SK-N-SH (cell line): ENCODE measurements at regions of chr7 and their contacts with region 1.

Region 1: DNA sequence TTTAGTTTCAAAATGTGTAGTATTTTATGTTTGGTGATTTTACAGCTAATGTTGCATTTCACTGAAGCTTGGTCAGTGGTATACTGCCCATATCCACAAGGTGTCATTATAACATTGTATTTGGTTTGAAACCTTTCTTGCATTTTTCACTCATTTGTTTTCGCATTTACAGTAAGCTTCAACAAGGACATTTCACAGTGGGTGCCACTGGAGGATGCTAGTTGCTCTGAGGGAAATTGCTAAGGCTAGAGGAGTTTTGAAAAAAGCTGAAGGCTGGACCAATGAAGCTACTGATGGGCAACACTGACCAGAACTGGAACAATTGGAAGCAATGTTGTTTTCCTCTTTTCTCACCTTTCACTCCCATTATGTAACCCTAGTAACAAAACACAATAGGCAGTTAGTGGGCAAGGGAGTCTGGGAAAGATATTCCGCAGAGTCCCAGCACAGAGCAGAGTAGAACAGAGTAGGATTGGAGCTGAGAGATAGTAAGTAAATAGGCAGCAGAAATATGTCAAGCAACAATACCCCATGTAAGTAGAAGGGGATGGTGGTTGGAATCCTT is 23.6 kb upstream of the SRI start:
- DNase-seq: peak; percentile 51
- H3K4me3 ChIP-seq: no peak overlapping the region; a peak in 1 of 4 replicates
- H3K27ac ChIP-seq: no peak overlapping the region
- H3K4me1 ChIP-seq: peaks cover 0 to 4% of the 10 kb centered on the region in 2 experiments; a peak in 2 of 4 replicates
- H3K27me3 ChIP-seq: no peaks in the 10 kb centered on the region
- CTCF ChIP-seq: peak; percentile 96
- EP300 ChIP-seq: no peak
- RAD21 ChIP-seq: peak; percentile 99

Region 2: GRCh38 chr7:88146616-88147015 is 96.8 kb before region 1 on chr7:
- CTCF ChIA-PET with region 1: no interaction called
- POLR2A ChIA-PET with region 1: no interaction called
- DNase-seq: no peak
- H3K4me3 ChIP-seq: no peak overlapping the region
- H3K27ac ChIP-seq: no peak overlapping the region
- H3K4me1 ChIP-seq: peaks cover 0 to 6% of the 10 kb centered on the region in 2 experiments; a peak in 2 of 4 replicates
- H3K27me3 ChIP-seq: no peaks in the 10 kb centered on the region
- CTCF ChIP-seq: no peak
- EP300 ChIP-seq: no peak
- RAD21 ChIP-seq: no peak

Region 3: DNA sequence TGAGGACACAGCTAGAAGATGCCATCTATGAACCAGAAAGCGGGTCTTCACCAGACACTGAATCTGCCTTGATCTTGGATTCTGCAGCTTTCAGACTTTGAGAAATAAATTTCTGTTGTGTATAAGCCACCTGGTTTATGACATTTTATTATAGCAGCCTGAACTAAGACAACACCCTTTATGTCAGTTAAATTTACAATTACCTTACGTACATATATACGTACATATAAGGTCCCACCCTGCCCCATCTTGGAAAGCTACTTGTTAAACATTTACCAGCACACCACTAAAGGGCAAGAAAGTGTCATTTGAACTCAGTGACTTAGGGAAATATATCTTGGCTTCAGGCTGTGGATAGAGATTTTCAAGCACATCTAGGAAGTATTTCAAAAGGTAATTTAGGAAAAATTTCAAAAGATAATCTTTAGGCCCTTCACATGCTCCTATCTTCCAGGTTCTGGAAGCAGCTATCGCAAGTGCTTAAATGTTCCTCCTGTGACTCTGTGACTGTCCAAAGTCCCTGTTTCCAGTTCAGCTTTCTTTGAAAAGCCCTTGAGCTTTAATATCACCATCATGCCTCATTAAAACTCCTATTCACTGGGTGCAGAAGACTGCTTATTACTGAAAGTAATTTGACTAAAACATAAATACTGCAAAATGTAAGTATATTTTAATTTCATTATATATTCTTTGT is 14.0 kb before region 1 on chr7:
- CTCF ChIA-PET with region 1: interaction called, 10 read pairs
- POLR2A ChIA-PET with region 1: no interaction called
- DNase-seq: no peak
- H3K4me3 ChIP-seq: no peak overlapping the region
- H3K27ac ChIP-seq: no peak overlapping the region
- H3K4me1 ChIP-seq: 0 out of 4 replicates have a peak, but pooled peaks cover 0 to 7% of the 10 kb centered on the region in 2 experiments
- H3K27me3 ChIP-seq: no peaks in the 10 kb centered on the region; the same call in 1 of the 2 replicates
- CTCF ChIP-seq: no peak
- EP300 ChIP-seq: no peak
- RAD21 ChIP-seq: no peak

Region 4: DNA sequence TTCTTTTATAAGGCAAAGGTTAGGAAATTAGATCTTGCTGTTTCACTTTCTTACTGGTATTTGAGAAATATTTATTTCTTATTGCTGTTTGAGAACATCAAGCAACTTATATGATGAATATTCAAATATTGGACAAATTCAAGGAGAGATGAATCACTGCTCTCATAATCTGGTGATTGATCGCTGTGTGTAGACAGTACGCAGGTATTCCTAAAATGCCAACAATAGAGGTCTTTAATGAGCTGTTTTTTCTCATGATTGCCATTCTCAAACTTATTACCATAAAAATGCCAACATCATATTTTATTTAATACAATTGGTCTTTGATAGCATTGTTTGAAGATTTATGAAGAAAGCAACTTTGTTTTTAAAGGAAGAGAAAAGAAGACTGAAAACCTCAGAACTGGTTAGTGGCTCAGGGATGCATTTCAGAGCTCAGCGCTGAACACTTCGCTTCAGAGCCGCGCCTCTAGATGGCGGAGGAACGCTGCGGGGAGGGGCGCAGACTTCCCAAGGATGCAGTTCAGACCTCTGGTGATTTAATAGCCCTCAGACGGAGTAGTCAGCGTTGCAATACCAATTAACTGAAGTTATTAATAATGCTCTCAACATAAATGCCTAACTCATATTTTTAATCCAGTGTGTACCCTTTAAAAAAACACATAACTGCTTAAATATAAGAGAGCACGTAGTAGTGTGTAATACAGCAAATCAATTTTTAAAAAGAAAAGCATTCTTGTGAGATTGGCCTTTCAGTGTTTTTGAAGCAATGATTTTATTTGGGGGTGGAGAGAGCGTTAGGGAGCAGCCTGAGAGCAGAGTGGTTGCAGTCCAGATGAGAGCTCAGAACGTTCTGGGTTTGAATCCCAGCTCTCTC is 101.8 kb after region 1 on chr7:
- CTCF ChIA-PET with region 1: interaction called, 30 read pairs
- POLR2A ChIA-PET with region 1: no interaction called
- DNase-seq: peak; percentile 47
- H3K4me3 ChIP-seq: no peak overlapping the region
- H3K27ac ChIP-seq: no peak overlapping the region
- H3K4me1 ChIP-seq: no peaks in the 10 kb centered on the region; a peak in 1 of 4 replicates
- H3K27me3 ChIP-seq: peaks cover 7% of the 10 kb centered on the region; the same call in 1 of the 2 replicates
- CTCF ChIP-seq: peak; percentile 52
- EP300 ChIP-seq: no peak
- RAD21 ChIP-seq: peak; percentile 79

Region 5: GRCh38 chr7:88617185-88617584 is 373.8 kb after region 1 on chr7:
- CTCF ChIA-PET with region 1: no interaction called
- POLR2A ChIA-PET with region 1: no interaction called
- DNase-seq: no peak
- H3K4me3 ChIP-seq: no peak overlapping the region
- H3K27ac ChIP-seq: no peak overlapping the region
- H3K4me1 ChIP-seq: no peaks in the 10 kb centered on the region
- H3K27me3 ChIP-seq: no peaks in the 10 kb centered on the region
- CTCF ChIP-seq: no peak
- EP300 ChIP-seq: no peak
- RAD21 ChIP-seq: no peak

Region 6: DNA sequence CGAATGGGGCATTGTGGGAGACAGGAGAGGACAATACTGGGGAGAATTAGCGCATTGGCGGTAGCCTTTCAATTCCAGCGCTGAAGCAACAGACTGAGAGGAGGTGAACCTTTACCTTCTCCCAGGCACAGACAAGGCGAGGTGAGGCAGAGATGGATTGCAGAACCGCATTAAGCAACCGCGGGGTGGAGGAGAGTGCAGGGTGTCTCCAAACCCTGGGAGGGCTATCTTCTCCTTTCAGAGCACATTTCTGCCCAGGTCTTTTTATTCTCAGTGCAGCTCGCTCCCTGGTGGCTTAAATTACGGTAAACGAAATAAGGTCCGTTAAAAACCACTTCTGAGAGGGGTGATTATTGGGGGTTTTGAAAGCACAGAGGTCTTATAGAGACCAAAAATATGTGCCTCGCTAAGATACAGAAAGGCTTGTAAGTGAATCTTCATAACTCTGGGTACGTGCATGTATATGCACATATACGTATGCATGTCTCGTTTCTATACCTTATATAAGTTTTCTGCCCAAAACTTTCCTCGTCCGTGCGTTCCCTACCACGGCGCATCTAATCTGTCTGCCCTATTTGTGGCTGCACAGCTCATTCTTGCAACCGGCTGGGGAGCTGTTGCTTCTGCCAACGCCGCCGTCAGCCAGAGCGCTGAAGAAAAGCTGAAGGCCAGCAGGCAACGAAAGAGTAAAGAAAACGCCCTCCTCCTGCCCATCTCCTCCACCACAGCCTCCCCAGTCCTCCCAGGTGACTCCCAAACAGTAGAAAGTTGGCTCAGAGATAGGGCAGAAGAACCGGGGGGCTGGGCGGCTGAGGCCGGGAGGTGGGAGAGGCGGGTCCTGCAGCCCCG is 515.2 kb after region 1 on chr7:
- CTCF ChIA-PET with region 1: interaction called, 11 read pairs
- POLR2A ChIA-PET with region 1: no interaction called
- DNase-seq: peak; percentile 61
- H3K4me3 ChIP-seq: peak overlapping the region; percentile 47 to 48
- H3K27ac ChIP-seq: no peak overlapping the region
- H3K4me1 ChIP-seq: peaks cover 0 to 17% of the 10 kb centered on the region in 2 experiments; a peak in 2 of 4 replicates
- H3K27me3 ChIP-seq: peaks cover 29% of the 10 kb centered on the region
- CTCF ChIP-seq: no peak
- EP300 ChIP-seq: no peak
- RAD21 ChIP-seq: peak; percentile 32

Region 7: GRCh38 chr7:89622838-89623672 is 1379.6 kb after region 1 on chr7:
- CTCF ChIA-PET with region 1: interaction called, 10 read pairs
- POLR2A ChIA-PET with region 1: no interaction called
- DNase-seq: peak; percentile 37
- H3K4me3 ChIP-seq: no peak overlapping the region
- H3K27ac ChIP-seq: no peak overlapping the region
- H3K4me1 ChIP-seq: no peaks in the 10 kb centered on the region; a peak in 2 of 4 replicates
- H3K27me3 ChIP-seq: peaks cover 8% of the 10 kb centered on the region; the same call in 1 of the 2 replicates
- CTCF ChIP-seq: peak; percentile 95
- EP300 ChIP-seq: no peak
- RAD21 ChIP-seq: peak; percentile 98